ENCODE measurements at regions of chr4 and their contacts with region 1.

Region 1: GRCh38 chr4:81405894-81406401 is 65.8 kb downstream of the RASGEF1B start:
- DNase-seq: peak in 7 of 9 donors; percentile 54 to 80 (median 70)
- ATAC-seq: peak; percentile 88
- H3K4me3 ChIP-seq: no peak overlapping the region
- H3K4me3 Mint-ChIP-seq: peak overlapping the region in 4 of 10 donors; percentile 8 to 56 (median 20)
- H3K27ac ChIP-seq: no peak overlapping the region
- H3K27ac Mint-ChIP-seq: no peak overlapping the region
- H3K4me1 ChIP-seq: no peaks in the 10 kb centered on the region
- H3K4me1 Mint-ChIP-seq: peaks cover 0 to 9% (median 4%) of the 10 kb centered on the region in 7 donors
- H3K27me3 ChIP-seq: no peaks in the 10 kb centered on the region
- H3K27me3 Mint-ChIP-seq: peaks cover 0 to 8% (median 0%) of the 10 kb centered on the region in 5 donors

Region 2: GRCh38 chr4:81844717-81845116 is 438.8 kb after region 1 on chr4:
- CTCF ChIA-PET with region 1: interaction called, 4 read pairs
- POLR2A ChIA-PET with region 1: no interaction called
- intact Hi-C with region 1: loop called (anchors 1 kb)
- DNase-seq: peak; percentile 9 to 75 (median 62)
- ATAC-seq: peak; percentile 96
- H3K4me3 ChIP-seq: no peak overlapping the region
- H3K4me3 Mint-ChIP-seq: no peak overlapping the region
- H3K27ac ChIP-seq: no peak overlapping the region
- H3K27ac Mint-ChIP-seq: no peak overlapping the region
- H3K4me1 ChIP-seq: no peaks in the 10 kb centered on the region
- H3K4me1 Mint-ChIP-seq: no peaks in the 10 kb centered on the region
- H3K27me3 ChIP-seq: no peaks in the 10 kb centered on the region
- H3K27me3 Mint-ChIP-seq: peaks cover 0 to 3% (median 0%) of the 10 kb centered on the region in 5 donors

Region 3: GRCh38 chr4:82123934-82124333 is 718.0 kb after region 1 on chr4:
- CTCF ChIA-PET with region 1: no interaction called
- POLR2A ChIA-PET with region 1: no interaction called
- intact Hi-C with region 1: loop called in 1 of 2 experiments (anchors 10 kb)
- DNase-seq: peak in 6 of 9 donors; percentile 22 to 49 (median 28)
- ATAC-seq: peak; percentile 47
- H3K4me3 ChIP-seq: no peak overlapping the region
- H3K4me3 Mint-ChIP-seq: peak overlapping the region in 3 of 10 donors; percentile 2 to 29 (median 5)
- H3K27ac ChIP-seq: no peak overlapping the region
- H3K27ac Mint-ChIP-seq: peak overlapping the region in 2 of 9 donors; percentile 40 to 80
- H3K4me1 ChIP-seq: no peaks in the 10 kb centered on the region
- H3K4me1 Mint-ChIP-seq: peaks cover 0 to 17% (median 5%) of the 10 kb centered on the region in 7 donors
- H3K27me3 ChIP-seq: no peaks in the 10 kb centered on the region
- H3K27me3 Mint-ChIP-seq: peaks cover 0 to 3% (median 0%) of the 10 kb centered on the region in 5 donors

Region 4: DNA sequence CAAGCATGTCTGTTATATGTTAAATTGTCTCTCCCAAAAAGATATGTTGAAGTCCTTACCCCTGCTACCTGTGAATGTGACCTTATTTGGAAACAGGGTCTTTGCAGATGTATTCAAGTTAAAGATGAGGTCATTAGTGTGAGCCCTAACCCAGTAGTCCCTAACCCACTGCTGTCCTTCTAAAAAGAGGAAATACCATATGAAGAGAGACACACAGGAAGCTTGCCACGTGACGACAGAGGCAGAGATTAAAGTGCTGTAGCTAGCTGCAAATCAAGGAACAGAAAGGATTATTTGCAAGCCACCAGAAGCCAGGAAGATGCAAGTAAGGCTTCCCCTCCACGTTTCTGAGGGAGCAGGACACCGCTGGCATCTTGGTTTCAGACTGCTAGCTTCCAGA is 817.8 kb after region 1 on chr4:
- CTCF ChIA-PET with region 1: no interaction called
- POLR2A ChIA-PET with region 1: no interaction called
- intact Hi-C with region 1: loop called in 1 of 2 experiments (anchors 5 kb)
- DNase-seq: peak in 7 of 9 donors; percentile 32 to 57 (median 49)
- ATAC-seq: peak; percentile 93
- H3K4me3 ChIP-seq: no peak overlapping the region
- H3K4me3 Mint-ChIP-seq: peak overlapping the region in 8 of 10 donors; percentile 8 to 74 (median 63)
- H3K27ac ChIP-seq: no peak overlapping the region
- H3K27ac Mint-ChIP-seq: peak overlapping the region in 6 of 9 donors; percentile 3 to 65 (median 35)
- H3K4me1 ChIP-seq: peaks cover 0 to 15% of the 10 kb centered on the region in 2 donors
- H3K4me1 Mint-ChIP-seq: peaks cover 4 to 27% (median 15%) of the 10 kb centered on the region in 7 donors
- H3K27me3 ChIP-seq: no peaks in the 10 kb centered on the region
- H3K27me3 Mint-ChIP-seq: peaks cover 0 to 4% (median 2%) of the 10 kb centered on the region in 5 donors

Region 5: DNA sequence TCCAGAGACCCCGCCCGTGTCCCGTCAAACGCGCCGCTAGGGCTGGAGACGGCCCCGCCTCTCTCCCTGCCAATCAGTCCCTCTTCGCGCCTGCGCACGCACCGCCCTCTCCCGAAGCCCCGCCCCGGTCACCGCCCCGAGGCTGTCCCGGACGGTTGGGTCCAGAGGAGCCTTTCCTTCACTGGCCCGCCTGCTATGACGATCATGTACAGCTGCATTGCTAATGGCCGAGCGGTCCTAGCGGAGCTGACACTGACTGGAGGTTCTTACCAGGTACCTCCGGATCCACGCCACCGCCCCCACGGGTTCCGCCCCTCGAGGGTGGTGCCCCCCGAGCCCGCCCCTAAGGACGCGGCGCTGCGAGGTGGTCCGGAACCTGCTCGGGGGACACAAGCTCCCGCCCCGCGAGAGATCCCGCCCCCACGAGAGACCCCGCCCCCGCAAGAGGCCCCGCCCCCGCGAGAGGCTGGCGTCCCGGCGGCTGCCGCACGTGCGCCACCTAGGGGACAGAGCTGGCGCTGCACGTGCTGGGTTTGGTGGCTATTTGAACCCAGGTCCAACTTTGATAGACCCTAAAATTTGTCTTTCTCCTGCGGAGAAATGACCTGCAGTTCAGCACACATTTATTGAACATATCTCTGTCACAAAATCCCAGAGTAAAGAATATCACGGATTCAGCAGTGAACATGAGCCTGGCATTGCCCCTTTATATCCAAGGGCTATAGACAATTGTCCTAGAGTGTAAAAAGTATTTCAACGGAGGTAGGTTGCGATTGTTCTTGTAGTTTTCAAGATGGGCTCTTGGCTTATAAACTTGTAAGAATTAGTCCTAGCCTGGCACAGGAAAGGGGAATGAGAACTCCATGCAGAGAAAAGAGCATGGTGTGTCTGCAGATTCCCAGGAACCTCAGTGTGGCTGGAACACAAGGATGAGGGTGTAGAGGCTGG is 879.2 kb after region 1 on chr4:
- CTCF ChIA-PET with region 1: no interaction called
- POLR2A ChIA-PET with region 1: no interaction called
- intact Hi-C with region 1: loop called in 1 of 2 experiments (anchors 1 kb)
- DNase-seq: peak; percentile 97 to 100 (median 99)
- ATAC-seq: peak; percentile 94
- H3K4me3 ChIP-seq: peak overlapping the region; percentile 55
- H3K4me3 Mint-ChIP-seq: peak overlapping the region; percentile 70 to 91 (median 86)
- H3K27ac ChIP-seq: peak overlapping the region; percentile 71
- H3K27ac Mint-ChIP-seq: peak overlapping the region; percentile 53 to 94 (median 83)
- H3K4me1 ChIP-seq: peaks cover 4 to 11% of the 10 kb centered on the region in 2 donors
- H3K4me1 Mint-ChIP-seq: peaks cover 9 to 22% (median 13%) of the 10 kb centered on the region in 7 donors
- H3K27me3 ChIP-seq: no peaks in the 10 kb centered on the region
- H3K27me3 Mint-ChIP-seq: peaks cover 0 to 28% (median 0%) of the 10 kb centered on the region in 5 donors

Region 6: DNA sequence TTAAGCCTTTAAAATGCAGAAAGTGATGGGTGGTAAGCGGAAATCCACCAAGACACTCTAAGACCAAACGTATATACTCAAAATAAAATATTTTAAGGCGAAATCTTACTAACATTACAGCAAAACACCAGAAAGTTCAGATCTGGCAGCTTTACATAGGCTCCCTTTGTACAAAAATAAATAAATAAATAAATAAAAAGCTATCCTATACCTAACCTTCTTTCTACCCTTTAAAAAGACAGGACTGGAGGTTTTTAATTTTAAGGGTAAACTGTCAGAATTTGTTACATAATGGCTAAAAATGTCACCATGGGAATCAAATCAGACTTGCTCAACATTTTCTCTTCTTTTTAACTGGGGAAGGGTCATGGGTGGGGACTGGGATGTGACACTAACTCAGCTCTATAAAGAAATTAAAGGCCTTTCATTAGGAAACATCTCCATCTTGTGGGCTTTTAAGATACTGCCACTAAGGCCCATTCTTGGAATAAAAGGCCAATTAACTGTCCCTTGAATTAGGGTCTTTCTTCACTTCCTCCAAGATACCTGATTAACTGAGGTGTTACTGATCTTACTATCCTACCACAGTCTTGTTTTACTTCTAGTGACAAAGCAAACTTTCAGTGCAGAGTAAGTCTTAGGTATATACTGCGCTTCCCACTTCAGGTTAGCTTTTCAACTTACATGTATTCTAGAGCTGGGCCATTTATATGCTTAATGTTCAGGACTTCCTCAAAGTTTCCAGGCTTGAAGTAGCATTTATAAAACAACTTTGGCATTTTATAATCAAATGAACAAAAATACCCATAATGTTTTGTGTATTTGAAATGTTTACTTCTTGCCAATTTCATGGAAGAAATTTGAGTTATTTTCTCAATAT is 954.6 kb after region 1 on chr4:
- CTCF ChIA-PET with region 1: no interaction called
- POLR2A ChIA-PET with region 1: no interaction called
- intact Hi-C with region 1: loop called in 1 of 2 experiments (anchors 2 kb)
- DNase-seq: peak in 6 of 9 donors; percentile 17 to 33 (median 31)
- ATAC-seq: peak; percentile 70
- H3K4me3 ChIP-seq: no peak overlapping the region
- H3K4me3 Mint-ChIP-seq: peak overlapping the region in 7 of 10 donors; percentile 0 to 56 (median 36)
- H3K27ac ChIP-seq: peak overlapping the region; percentile 18
- H3K27ac Mint-ChIP-seq: peak overlapping the region in 8 of 9 donors; percentile 34 to 85 (median 54)
- H3K4me1 ChIP-seq: peaks cover 62 to 74% of the 10 kb centered on the region in 2 donors
- H3K4me1 Mint-ChIP-seq: peaks cover 64 to 98% (median 89%) of the 10 kb centered on the region in 7 donors
- H3K27me3 ChIP-seq: no peaks in the 10 kb centered on the region
- H3K27me3 Mint-ChIP-seq: no peaks in the 10 kb centered on the region